HAP-1 (cell line): ENCODE measurements at regions of chr17 and their contacts with region 1.

Region 1: GRCh38 chr17:16820161-16820877 is 130.3 kb downstream of the CCDC144A start:
- DNase-seq: no peak
- H3K4me3 ChIP-seq: no peak overlapping the region
- H3K4me1 ChIP-seq: no peaks in the 10 kb centered on the region
- H3K27me3 ChIP-seq: no peaks in the 10 kb centered on the region

Region 2: GRCh38 chr17:16463358-16464302 is 356.7 kb before region 1 on chr17:
- in situ Hi-C with region 1: no loop called
- DNase-seq: no peak
- H3K4me3 ChIP-seq: no peak overlapping the region
- H3K4me1 ChIP-seq: no peaks in the 10 kb centered on the region
- H3K27me3 ChIP-seq: no peaks in the 10 kb centered on the region

Region 3: DNA sequence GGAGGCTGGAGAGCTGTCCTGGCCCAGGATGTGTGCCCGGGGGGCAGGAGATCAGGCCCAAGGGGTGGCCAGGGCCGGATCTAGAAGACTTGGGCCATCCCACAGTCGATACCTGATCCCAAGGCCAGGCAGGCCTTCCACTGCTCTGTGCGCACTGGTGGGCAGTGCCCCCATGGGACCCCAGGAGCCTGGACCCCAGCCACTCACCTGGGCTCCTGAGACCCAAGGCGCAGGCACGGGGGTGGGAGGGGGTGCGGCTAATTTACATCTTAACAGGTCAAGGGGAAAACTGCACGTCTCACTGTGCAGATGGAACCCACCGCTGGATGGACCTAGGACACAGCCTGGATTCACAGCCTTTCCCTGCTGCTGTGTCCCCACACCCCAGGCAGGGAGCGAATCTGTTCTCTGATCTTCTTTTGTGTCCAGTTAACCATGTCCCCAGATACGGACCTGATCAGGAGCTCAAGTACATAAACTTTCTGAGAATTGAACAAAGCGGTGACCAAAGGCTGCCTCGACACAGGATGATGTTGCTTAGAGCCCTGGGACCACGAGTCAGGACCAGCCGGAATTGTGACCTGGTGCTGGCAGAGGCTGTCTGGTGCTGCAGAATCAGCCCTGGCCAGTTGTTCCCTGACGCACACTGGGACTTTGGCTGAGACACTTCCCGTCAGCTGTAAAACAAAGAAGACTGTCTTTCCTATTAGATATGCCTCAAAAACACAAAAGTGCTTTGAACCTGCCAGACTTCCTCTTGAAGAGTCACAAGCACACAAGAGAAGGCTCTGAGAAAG is 91.0 kb after region 1 on chr17:
- in situ Hi-C with region 1: no loop called
- DNase-seq: no peak
- H3K4me3 ChIP-seq: no peak overlapping the region
- H3K4me1 ChIP-seq: no peaks in the 10 kb centered on the region
- H3K27me3 ChIP-seq: no peaks in the 10 kb centered on the region

Region 4: DNA sequence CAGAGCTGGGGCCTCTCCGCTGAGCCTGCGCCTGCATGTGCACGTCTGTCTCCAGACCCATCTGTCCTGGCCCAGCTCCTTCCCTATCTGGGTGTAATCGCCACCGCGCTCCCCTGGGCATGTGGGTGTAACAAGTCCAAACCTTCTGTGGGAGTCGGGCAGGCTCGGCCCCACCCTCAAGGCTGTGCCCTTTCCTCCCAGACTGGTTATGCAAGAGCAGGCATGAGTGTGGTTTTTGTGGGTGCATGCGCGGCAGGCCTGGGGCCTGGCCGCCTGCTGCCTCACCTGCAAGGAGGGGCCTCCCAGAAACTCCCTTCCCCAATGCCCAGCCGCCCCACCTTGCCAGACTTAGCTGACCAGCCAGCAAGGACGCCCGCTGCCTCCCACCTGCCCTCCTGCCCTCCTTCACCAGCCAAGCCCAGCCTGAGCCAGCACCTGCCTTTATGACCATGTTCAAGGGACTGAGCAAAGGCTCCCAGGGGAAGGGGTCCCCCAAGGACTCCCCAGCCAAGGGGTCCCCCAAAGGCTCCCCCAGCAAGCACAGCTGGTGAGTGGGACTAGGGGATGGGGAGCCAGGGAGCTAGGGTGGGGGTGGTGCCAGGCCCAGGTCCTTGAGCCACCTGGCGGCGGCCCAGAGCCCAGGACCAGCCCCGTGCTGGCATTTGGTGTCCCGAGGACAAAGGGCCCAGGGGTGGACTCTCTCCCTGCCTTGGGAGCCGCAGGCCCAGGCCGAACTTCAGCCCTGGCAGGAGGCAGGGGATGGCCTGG is 1557.3 kb after region 1 on chr17 and contains the start of gene EVPLL:
- in situ Hi-C with region 1: loop called (anchors 25 kb)
- DNase-seq: no peak
- H3K4me3 ChIP-seq: no peak within 1 kb of the TSS
- H3K4me1 ChIP-seq: no peaks in the 10 kb centered on the region
- H3K27me3 ChIP-seq: no peaks in the 10 kb centered on the region